HCT116 (cell line): ENCODE measurements at regions of chr3 and their contacts with region 1.

Region 1: GRCh38 chr3:87082796-87083440 is 92.0 kb upstream of the VGLL3 start:
- DNase-seq: peak; percentile 52
- ATAC-seq: peak; percentile 91
- H3K4me3 ChIP-seq: no peak overlapping the region
- H3K27ac ChIP-seq: no peak overlapping the region
- H3K4me1 ChIP-seq: no peaks in the 10 kb centered on the region
- H3K27me3 ChIP-seq: no peaks in the 10 kb centered on the region
- CTCF ChIP-seq: peak; percentile 44 to 65 (median 63); a peak in 5 of 6 replicates
- POLR2A ChIP-seq: no peak
- RAD21 ChIP-seq: peak; percentile 60

Region 2: DNA sequence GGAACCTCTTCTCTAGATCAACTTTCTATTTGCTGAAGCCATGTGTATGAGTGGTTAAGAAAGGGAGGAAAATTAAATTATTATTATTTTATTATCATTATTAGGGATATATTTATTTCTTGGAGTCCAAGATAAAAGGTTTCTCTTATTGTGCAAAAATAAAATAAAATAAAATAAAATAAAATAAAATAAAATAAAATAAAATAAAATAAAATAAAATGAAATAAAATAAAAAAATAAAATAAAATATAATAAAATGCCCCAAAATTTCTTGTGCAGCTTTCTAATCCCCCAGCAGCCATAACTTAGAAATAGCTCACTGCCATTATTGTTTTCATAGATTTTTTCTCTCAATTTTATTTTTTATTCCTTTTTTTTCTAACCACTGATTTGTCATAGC is 618.7 kb before region 1 on chr3:
- CTCF ChIA-PET with region 1: no interaction called
- POLR2A ChIA-PET with region 1: no interaction called
- RAD21 ChIA-PET with region 1: no interaction called
- intact Hi-C with region 1: no loop called
- DNase-seq: no peak
- ATAC-seq: no peak
- H3K4me3 ChIP-seq: no peak overlapping the region
- H3K27ac ChIP-seq: no peak overlapping the region
- H3K4me1 ChIP-seq: no peaks in the 10 kb centered on the region
- H3K27me3 ChIP-seq: no peaks in the 10 kb centered on the region
- CTCF ChIP-seq: no peak
- POLR2A ChIP-seq: no peak
- RAD21 ChIP-seq: no peak

Region 3: GRCh38 chr3:86563400-86563970 is 519.4 kb before region 1 on chr3:
- CTCF ChIA-PET with region 1: no interaction called
- POLR2A ChIA-PET with region 1: no interaction called
- RAD21 ChIA-PET with region 1: no interaction called
- intact Hi-C with region 1: loop called (anchors 10 kb)
- DNase-seq: peak; percentile 3
- ATAC-seq: no peak
- H3K4me3 ChIP-seq: no peak overlapping the region
- H3K27ac ChIP-seq: no peak overlapping the region
- H3K4me1 ChIP-seq: no peaks in the 10 kb centered on the region
- H3K27me3 ChIP-seq: no peaks in the 10 kb centered on the region
- CTCF ChIP-seq: peak in 2 of 3 experiments; percentile 35 to 69; a peak in 4 of 6 replicates
- POLR2A ChIP-seq: no peak
- RAD21 ChIP-seq: no peak

Region 4: GRCh38 chr3:86774082-86774691 is 308.7 kb before region 1 on chr3:
- CTCF ChIA-PET with region 1: interaction called, 6 read pairs
- POLR2A ChIA-PET with region 1: no interaction called
- RAD21 ChIA-PET with region 1: no interaction called
- intact Hi-C with region 1: loop called (anchors 2 kb)
- DNase-seq: no peak
- ATAC-seq: no peak
- H3K4me3 ChIP-seq: no peak overlapping the region
- H3K27ac ChIP-seq: no peak overlapping the region
- H3K4me1 ChIP-seq: no peaks in the 10 kb centered on the region
- H3K27me3 ChIP-seq: no peaks in the 10 kb centered on the region
- CTCF ChIP-seq: peak; percentile 20 to 54 (median 29); a peak in 3 of 6 replicates
- POLR2A ChIP-seq: no peak
- RAD21 ChIP-seq: peak; percentile 45; the same call in 1 of the 2 replicates

Region 5: DNA sequence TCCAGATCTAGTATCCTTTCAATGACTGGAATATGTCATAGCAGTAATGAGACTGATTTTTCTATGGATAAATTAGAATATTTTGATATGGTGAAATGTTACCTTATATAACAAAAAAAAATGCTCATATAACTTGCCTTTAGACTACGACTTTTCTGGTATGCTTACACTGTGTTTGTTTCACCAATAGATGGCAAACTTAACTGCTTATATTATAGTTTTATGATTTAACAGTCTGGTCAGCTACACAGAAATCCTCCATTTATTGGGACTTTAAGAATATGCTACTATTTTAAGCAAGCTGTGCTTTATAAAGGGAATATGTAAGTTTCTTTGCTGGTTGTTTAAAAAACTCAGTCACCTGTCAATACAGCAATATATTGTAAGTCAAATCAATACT is 297.5 kb before region 1 on chr3:
- CTCF ChIA-PET with region 1: no interaction called
- POLR2A ChIA-PET with region 1: no interaction called
- RAD21 ChIA-PET with region 1: no interaction called
- intact Hi-C with region 1: loop called (anchors 2 kb)
- DNase-seq: no peak
- ATAC-seq: no peak
- H3K4me3 ChIP-seq: no peak overlapping the region
- H3K27ac ChIP-seq: no peak overlapping the region
- H3K4me1 ChIP-seq: no peaks in the 10 kb centered on the region
- H3K27me3 ChIP-seq: no peaks in the 10 kb centered on the region
- CTCF ChIP-seq: no peak; a peak in 1 of 6 replicates
- POLR2A ChIP-seq: no peak
- RAD21 ChIP-seq: peak; percentile 19; the same call in 1 of the 2 replicates

Region 6: DNA sequence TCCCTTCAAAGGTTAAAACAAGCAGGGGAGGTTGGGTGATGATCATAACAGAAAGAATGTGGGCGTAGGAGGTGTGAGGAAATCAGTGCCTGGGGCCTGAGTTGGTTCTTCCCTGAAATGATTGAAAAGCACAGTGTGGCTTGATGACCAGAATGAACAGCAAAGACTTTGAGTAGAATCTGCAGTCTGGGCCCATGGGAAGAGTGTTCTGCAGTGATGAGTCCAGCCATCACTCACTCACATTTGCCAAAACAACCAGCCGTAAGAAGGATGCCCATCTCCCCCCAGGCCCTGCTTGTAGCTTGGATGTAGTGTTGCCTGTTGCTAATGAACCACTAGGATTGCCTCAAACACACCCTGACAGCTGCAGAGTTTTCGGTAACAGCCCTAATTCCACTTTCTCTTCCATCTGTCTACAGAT is 159.8 kb before region 1 on chr3:
- CTCF ChIA-PET with region 1: no interaction called
- POLR2A ChIA-PET with region 1: no interaction called
- RAD21 ChIA-PET with region 1: no interaction called
- intact Hi-C with region 1: no loop called
- DNase-seq: no peak
- ATAC-seq: no peak
- H3K4me3 ChIP-seq: no peak overlapping the region
- H3K27ac ChIP-seq: no peak overlapping the region
- H3K4me1 ChIP-seq: peaks cover 0 to 3% of the 10 kb centered on the region in 2 experiments; a peak in 1 of 4 replicates
- H3K27me3 ChIP-seq: no peaks in the 10 kb centered on the region
- CTCF ChIP-seq: no peak
- POLR2A ChIP-seq: no peak
- RAD21 ChIP-seq: no peak

Region 7: DNA sequence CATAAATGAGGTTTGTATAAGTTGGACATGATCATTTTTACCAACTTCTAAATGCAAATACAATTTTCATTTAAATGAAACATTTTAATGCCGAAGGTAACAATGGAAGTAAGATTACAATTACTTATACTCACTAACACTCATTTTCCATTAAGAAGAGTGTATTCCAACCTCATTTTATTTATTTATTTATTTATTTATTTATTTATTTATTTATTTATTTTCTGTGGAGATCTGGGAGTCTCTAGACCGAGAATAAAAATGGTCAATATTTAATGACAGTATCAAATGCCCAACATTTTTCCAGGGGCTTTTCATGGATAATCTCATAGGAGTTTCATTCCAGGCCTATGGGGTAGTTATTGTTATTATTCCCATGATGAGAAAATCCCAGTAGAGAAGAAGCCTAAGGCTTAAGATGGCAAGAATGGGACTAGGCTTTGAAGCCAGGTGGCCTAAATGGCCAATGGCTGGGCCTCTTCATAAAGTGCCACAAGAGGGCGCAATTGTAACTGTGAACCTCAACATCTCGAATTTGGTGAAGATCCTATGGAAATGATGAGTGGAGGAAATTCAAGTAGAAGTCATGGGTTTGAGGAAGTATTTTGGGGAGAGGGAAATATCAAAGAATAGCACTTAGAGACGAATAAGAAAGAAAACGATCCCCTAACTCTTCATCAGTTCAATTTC is 113.3 kb before region 1 on chr3:
- CTCF ChIA-PET with region 1: interaction called, 3 read pairs
- POLR2A ChIA-PET with region 1: no interaction called
- RAD21 ChIA-PET with region 1: no interaction called
- intact Hi-C with region 1: loop called (anchors 2 kb)
- DNase-seq: peak; percentile 38
- ATAC-seq: peak; percentile 75
- H3K4me3 ChIP-seq: no peak overlapping the region
- H3K27ac ChIP-seq: no peak overlapping the region
- H3K4me1 ChIP-seq: no peaks in the 10 kb centered on the region
- H3K27me3 ChIP-seq: no peaks in the 10 kb centered on the region
- CTCF ChIP-seq: peak; percentile 34 to 88 (median 73); a peak in 5 of 6 replicates
- POLR2A ChIP-seq: no peak
- RAD21 ChIP-seq: peak; percentile 52

Region 8: GRCh38 chr3:86982883-86983282 is 100.0 kb before region 1 on chr3:
- CTCF ChIA-PET with region 1: no interaction called
- POLR2A ChIA-PET with region 1: no interaction called
- RAD21 ChIA-PET with region 1: no interaction called
- intact Hi-C with region 1: no loop called
- DNase-seq: no peak
- ATAC-seq: no peak
- H3K4me3 ChIP-seq: no peak overlapping the region
- H3K27ac ChIP-seq: no peak overlapping the region
- H3K4me1 ChIP-seq: no peaks in the 10 kb centered on the region
- H3K27me3 ChIP-seq: 0 out of 2 replicates have a peak, but pooled peaks cover 5% of the 10 kb centered on the region
- CTCF ChIP-seq: no peak
- POLR2A ChIP-seq: no peak
- RAD21 ChIP-seq: no peak